Dorsolateral prefrontal cortex (tissue), 120 donors: ENCODE measurements at regions of chr1 and their contacts with region 1.

Region 1: DNA sequence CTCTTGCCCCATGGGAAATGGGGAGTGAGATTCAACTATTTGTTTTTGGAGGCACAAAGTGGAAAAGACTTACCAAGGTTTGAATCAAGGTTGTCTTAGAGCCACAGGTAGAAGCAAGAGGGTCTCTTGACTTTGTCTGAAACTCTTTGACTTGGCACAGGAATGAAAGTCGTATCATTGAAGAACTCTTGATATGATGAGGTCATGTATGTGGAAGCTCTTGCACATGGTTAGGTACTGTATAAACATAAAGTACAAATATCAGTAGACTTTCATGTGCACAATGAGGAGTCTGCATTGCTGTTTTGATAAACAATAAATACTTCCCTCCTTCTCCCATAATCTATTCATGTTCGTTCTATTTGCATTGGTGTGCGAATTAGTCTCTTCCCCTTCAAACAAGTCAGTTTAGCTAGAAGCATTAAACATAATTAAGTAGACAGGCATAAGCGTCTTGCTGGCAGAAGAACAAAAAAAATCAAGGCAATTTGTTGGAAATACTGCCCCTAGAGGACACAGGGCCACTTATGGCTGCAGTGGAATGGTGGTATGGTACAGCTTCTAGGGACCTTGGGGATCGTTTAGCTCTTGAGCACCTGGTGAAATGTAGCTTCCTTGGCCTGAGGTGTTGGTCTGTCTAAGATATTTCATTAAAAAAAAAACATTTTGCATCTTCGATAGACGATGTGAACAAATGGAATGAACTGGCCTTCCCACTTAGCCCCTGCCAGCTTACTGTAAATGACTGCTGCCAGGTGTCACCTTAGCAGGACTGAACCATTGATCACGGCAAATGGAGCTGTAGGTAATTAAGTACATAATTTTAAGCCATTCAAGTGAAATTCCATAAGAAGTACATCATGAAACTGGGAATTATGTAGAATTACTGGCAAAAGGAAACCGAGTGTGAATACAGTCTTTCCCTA is 218.0 kb upstream of the GALNT2 start:
- DNase-seq: no peak
- H3K4me3 ChIP-seq: no peak overlapping the region
- H3K27ac ChIP-seq: no peak overlapping the region
- H3K27me3 ChIP-seq: peaks cover 0 to 3% (median 0%) of the 10 kb centered on the region in 45 donors
- CTCF ChIP-seq: peak in 51 of 56 donors; percentile 7 to 58 (median 37)

Region 2: GRCh38 chr1:229778683-229779260 is 70.2 kb before region 1 on chr1:
- intact Hi-C with region 1: loop called in 1 of 2 experiments (anchors 10 kb)
- DNase-seq: no peak
- H3K4me3 ChIP-seq: no peak overlapping the region
- H3K27ac ChIP-seq: no peak overlapping the region
- H3K27me3 ChIP-seq: peaks cover 0 to 3% (median 0%) of the 10 kb centered on the region in 45 donors
- CTCF ChIP-seq: no peak